GM10248 (cell line): ENCODE measurements at regions of chr3 and their contacts with region 1.

Region 1: DNA sequence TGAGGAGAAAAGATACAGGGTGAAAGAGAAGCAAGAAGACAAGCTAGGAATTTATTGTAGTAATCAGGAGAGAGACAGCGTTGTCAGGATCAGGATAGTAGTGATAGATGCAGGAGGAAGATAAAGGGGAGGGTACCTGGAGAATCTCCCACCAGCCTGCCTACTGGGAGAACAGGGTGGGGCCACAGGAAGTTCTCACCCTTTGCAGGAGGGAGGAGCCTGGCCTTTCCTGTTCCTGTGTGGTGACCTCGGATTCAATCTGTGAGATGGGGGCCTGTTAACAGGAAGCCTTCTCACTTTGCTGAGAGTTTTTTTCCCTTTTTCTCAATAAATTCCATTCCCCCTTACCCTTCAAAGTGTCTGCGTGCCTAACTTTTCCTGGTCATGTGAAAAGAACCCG is 37.6 kb downstream of the GMPS start:
- DNase-seq: no peak
- CTCF ChIP-seq: no peak

Region 2: GRCh38 chr3:155895379-155895900 is 12.6 kb before region 1 on chr3:
- CTCF ChIA-PET with region 1: interaction called, 18 read pairs
- POLR2A ChIA-PET with region 1: no interaction called
- DNase-seq: no peak
- CTCF ChIP-seq: no peak